Calu3 (cell line): ENCODE measurements at regions of chr5 and their contacts with region 1.

Region 1: GRCh38 chr5:174424219-174425053 is 299.9 kb upstream of the MSX2 start:
- DNase-seq: no peak
- H3K4me3 Mint-ChIP-seq: no peak overlapping the region
- H3K27ac Mint-ChIP-seq: no peak overlapping the region
- H3K4me1 Mint-ChIP-seq: peaks cover 19% of the 10 kb centered on the region
- H3K27me3 Mint-ChIP-seq: no peaks in the 10 kb centered on the region
- CTCF ChIP-seq: no peak

Region 2: GRCh38 chr5:174464504-174465165 is 40.2 kb after region 1 on chr5:
- CTCF ChIA-PET with region 1: interaction called, 5 read pairs
- intact Hi-C with region 1: loop called (anchors 5 kb)
- DNase-seq: no peak
- H3K4me3 Mint-ChIP-seq: no peak overlapping the region
- H3K27ac Mint-ChIP-seq: no peak overlapping the region
- H3K4me1 Mint-ChIP-seq: peaks cover 22% of the 10 kb centered on the region
- H3K27me3 Mint-ChIP-seq: no peaks in the 10 kb centered on the region
- CTCF ChIP-seq: peak; percentile 15